ENCODE measurements at regions of chr13 and their contacts with region 1.

Region 1: GRCh38 chr13:40069173-40070044 is 413.9 kb downstream of the COG6 start:
- DNase-seq: peak; percentile 87
- H3K4me3 Mint-ChIP-seq: peak overlapping the region; percentile 12
- H3K27ac Mint-ChIP-seq: peak overlapping the region; percentile 27
- H3K4me1 Mint-ChIP-seq: peaks cover 29% of the 10 kb centered on the region
- H3K27me3 Mint-ChIP-seq: no peaks in the 10 kb centered on the region

Region 2: DNA sequence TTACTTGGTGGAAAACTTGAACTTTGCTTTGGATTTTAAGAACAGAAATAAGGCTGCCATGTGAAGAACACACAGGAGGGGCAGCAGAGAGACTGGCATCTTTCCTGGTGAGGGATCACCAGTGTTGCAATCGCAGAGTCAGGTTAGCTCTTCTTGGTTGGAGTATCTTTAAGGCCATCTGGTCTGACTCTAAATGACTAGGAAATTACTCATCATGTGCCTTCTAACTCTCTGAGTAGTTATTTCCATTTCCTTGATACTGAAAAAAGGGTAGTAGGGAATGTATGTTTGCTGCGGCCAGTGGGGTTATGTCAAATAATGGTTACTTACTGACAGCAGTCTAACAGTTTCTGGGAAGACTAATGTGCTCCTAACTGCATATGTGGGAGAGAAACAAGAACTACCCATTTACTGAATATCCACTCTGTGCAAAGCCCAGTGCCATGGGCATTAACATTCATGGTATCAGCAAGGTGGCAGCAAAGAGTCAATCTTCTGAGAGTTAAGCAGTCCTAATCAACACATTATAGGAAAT is 291.8 kb before region 1 on chr13:
- CTCF ChIA-PET with region 1: no interaction called
- intact Hi-C with region 1: loop called (anchors 2 kb)
- DNase-seq: peak; percentile 70
- H3K4me3 Mint-ChIP-seq: no peak overlapping the region
- H3K27ac Mint-ChIP-seq: peak overlapping the region; percentile 80
- H3K4me1 Mint-ChIP-seq: peaks cover 46% of the 10 kb centered on the region
- H3K27me3 Mint-ChIP-seq: no peaks in the 10 kb centered on the region

Region 3: DNA sequence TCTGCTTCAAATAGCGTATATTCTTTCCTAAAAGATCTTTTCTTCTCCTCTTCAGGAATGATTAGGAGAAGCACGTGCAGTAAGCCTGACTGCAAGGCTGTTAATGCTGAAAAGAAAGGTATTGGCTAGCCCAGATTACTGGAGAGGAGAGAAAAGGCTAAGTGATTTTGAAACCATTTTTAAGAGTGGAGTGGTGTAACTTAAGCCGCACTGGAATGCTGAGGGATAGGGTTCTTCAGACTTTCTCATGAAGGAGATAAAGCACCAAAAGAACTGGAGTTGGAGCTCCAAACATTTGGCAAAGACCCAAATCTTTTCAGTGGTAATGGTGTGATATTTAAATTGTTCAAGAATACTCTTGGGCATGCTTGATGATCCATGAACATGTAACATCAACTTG is 25.6 kb before region 1 on chr13:
- CTCF ChIA-PET with region 1: no interaction called
- intact Hi-C with region 1: no loop called
- DNase-seq: no peak
- H3K4me3 Mint-ChIP-seq: no peak overlapping the region
- H3K27ac Mint-ChIP-seq: no peak overlapping the region
- H3K4me1 Mint-ChIP-seq: no peaks in the 10 kb centered on the region
- H3K27me3 Mint-ChIP-seq: peaks cover 3% of the 10 kb centered on the region

Region 4: DNA sequence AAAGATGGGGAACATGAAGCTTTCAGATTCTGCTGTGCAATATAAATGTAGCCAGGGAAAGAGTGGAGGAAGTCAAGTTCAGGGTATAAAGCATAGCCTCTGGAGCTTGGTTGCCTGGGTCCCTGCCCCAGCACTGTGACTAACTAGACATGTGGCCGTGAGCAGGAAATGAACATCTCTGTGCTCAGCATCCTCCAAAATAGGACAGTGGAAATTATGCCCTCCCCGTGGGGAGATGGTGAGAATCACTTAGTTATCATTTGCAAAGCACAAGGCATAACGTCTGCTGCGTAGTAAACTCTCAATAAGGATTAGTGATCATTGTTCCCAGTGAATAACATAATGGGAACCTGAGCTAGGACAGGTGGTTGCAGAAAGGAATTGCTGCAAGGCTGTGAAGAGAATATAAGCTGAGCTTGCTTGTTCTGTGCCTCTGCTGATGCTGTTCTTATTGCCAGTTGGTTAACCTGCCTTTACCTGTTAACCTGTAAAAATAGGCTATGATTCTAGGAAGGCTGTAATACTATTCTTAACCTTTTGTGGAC is 27.0 kb after region 1 on chr13:
- CTCF ChIA-PET with region 1: interaction called, 17 read pairs
- intact Hi-C with region 1: no loop called
- DNase-seq: peak; percentile 75
- H3K4me3 Mint-ChIP-seq: no peak overlapping the region
- H3K27ac Mint-ChIP-seq: peak overlapping the region; percentile 20
- H3K4me1 Mint-ChIP-seq: peaks cover 30% of the 10 kb centered on the region
- H3K27me3 Mint-ChIP-seq: no peaks in the 10 kb centered on the region

Region 5: GRCh38 chr13:40200273-40200978 is 131.0 kb after region 1 on chr13:
- CTCF ChIA-PET with region 1: interaction called, 12 read pairs
- intact Hi-C with region 1: no loop called
- DNase-seq: no peak
- H3K4me3 Mint-ChIP-seq: no peak overlapping the region
- H3K27ac Mint-ChIP-seq: peak overlapping the region; percentile 19
- H3K4me1 Mint-ChIP-seq: peaks cover 41% of the 10 kb centered on the region
- H3K27me3 Mint-ChIP-seq: no peaks in the 10 kb centered on the region

Region 6: GRCh38 chr13:40433577-40433976 is 364.2 kb after region 1 on chr13:
- CTCF ChIA-PET with region 1: no interaction called
- intact Hi-C with region 1: loop called (anchors 5 kb)
- DNase-seq: peak; percentile 64
- H3K4me3 Mint-ChIP-seq: no peak overlapping the region
- H3K27ac Mint-ChIP-seq: no peak overlapping the region
- H3K4me1 Mint-ChIP-seq: peaks cover 51% of the 10 kb centered on the region
- H3K27me3 Mint-ChIP-seq: no peaks in the 10 kb centered on the region